Panc1 (cell line): ENCODE measurements at regions of chr1 and their contacts with region 1.

Region 1: DNA sequence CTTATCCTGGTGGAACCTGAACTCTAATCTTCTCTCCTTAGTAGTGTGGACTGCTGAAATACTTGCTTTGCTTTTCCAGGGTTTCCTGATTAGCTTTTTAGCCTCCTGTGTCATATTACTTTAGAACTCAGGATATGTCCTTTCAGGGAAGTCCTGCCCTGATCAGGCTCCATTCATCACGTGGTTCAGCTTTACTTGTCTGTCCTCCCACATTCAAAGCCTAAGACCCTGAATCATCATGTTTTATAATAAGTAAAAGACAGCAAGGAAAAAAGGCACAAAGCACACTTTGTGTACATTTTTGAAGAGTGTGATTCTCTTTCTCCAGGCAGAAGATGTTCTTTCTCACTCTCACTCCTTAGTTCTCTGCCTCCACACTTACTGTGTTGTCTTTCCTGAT is 70.6 kb downstream of the PATJ start:
- DNase-seq: no peak
- ATAC-seq: no peak
- H3K4me3 ChIP-seq: no peak overlapping the region
- H3K27ac ChIP-seq: no peak overlapping the region
- H3K4me1 ChIP-seq: no peaks in the 10 kb centered on the region
- H3K27me3 ChIP-seq: no peaks in the 10 kb centered on the region
- CTCF ChIP-seq: no peak

Region 2: GRCh38 chr1:61967750-61968149 is 154.8 kb after region 1 on chr1:
- CTCF ChIA-PET with region 1: no interaction called
- POLR2A ChIA-PET with region 1: interaction called, 16 read pairs
- in situ Hi-C with region 1: no loop called
- intact Hi-C with region 1: no loop called
- DNase-seq: no peak
- ATAC-seq: no peak
- H3K4me3 ChIP-seq: no peak overlapping the region
- H3K27ac ChIP-seq: no peak overlapping the region
- H3K4me1 ChIP-seq: no peaks in the 10 kb centered on the region
- H3K27me3 ChIP-seq: no peaks in the 10 kb centered on the region
- CTCF ChIP-seq: no peak